ENCODE measurements at regions of chr2 and their contacts with region 1.

Region 1: GRCh38 chr2:68467077-68467960 is at the starts of genes APLF and FBXO48:
- DNase-seq: peak; percentile 98
- ATAC-seq: peak; percentile 91
- H3K4me3 ChIP-seq: peak within 1 kb of the TSS; percentile 72 to 98 (median 90)
- H3K4me3 Mint-ChIP-seq: peak within 1 kb of the TSS; percentile 97
- H3K27ac ChIP-seq: peak within 1 kb of the TSS; percentile 85 to 97
- H3K27ac Mint-ChIP-seq: peak within 1 kb of the TSS; percentile 96
- H3K4me1 ChIP-seq: peaks cover 11 to 15% of the 10 kb centered on the region in 2 donors
- H3K4me1 Mint-ChIP-seq: peaks cover 28% of the 10 kb centered on the region
- H3K27me3 ChIP-seq: no peaks in the 10 kb centered on the region
- H3K27me3 Mint-ChIP-seq: no peaks in the 10 kb centered on the region
- CTCF ChIP-seq: no peak
- total RNA-seq, gene APLF: 6.3 and 7.4 TPM in 2 replicates
- total RNA-seq, gene FBXO48: 3.2 TPM in 2 replicates

Region 2: DNA sequence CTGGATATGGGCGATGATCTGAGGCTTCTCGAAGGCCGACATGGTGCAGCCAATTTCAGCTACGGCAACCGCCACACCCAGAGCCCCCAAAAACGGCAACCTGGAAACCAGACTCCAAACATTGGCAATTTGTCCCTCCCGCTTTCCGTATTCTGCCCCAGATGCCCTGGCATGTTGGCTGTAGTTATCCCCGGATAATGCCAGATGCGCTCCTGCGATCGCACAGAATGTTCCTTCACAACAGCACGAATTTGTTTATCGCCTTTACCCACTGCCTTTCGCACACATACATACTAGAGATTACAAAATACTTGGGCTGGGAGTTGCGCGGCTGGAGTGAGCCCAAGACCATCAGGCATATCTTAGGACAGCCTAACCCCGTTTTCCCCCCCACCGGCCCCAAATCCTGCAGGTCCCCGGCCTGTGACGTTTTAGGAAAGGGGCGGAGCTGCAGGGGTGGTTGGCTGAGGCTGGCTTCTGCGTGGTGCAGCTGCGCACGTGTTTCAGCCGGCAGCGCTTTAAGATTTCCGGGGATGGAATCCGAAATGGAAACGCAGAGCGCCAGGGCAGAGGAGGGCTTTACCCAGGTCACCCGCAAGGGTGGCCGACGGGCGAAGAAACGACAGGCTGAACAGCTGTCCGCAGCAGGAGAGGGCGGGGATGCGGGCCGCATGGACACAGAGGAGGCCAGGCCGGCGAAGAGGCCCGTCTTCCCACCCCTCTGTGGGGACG is 309.8 kb before region 1 on chr2 and contains the start of gene PNO1:
- CTCF ChIA-PET with region 1: no interaction called
- POLR2A ChIA-PET with region 1: no interaction called
- intact Hi-C with region 1: loop called (anchors 1 kb)
- DNase-seq: peak; percentile 98
- ATAC-seq: peak; percentile 95
- H3K4me3 ChIP-seq: peak within 1 kb of the TSS; percentile 80 to 93 (median 89)
- H3K4me3 Mint-ChIP-seq: peak within 1 kb of the TSS; percentile 97
- H3K27ac ChIP-seq: peak within 1 kb of the TSS; percentile 96 to 98
- H3K27ac Mint-ChIP-seq: peak within 1 kb of the TSS; percentile 100
- H3K4me1 ChIP-seq: peaks cover 32 to 35% of the 10 kb centered on the region in 2 donors
- H3K4me1 Mint-ChIP-seq: peaks cover 48% of the 10 kb centered on the region
- H3K27me3 ChIP-seq: no peaks in the 10 kb centered on the region
- H3K27me3 Mint-ChIP-seq: no peaks in the 10 kb centered on the region
- CTCF ChIP-seq: no peak
- total RNA-seq, gene PNO1: 10.8 and 12.3 TPM in 2 replicates

Region 3: DNA sequence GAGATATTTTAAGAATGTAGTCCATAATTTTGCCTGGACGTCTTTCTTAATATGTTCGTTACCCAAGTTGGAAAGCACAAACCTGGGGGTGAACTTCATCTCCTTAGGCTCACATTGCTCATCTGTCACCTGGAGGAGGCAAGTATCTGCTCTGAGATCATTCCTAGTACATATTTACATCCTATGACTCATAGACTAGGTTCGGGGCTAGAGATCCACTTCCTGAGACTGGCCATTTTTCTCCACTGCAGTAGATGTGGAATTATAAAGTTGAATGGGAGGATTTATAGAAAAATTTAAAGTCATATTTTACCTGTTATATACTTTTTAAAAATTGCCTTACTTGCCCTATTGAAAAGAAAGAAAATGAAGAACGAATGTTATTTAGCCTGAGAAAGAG is 98.5 kb after region 1 on chr2:
- CTCF ChIA-PET with region 1: no interaction called
- POLR2A ChIA-PET with region 1: no interaction called
- intact Hi-C with region 1: no loop called
- DNase-seq: no peak
- ATAC-seq: no peak
- H3K4me3 ChIP-seq: no peak overlapping the region
- H3K4me3 Mint-ChIP-seq: no peak overlapping the region
- H3K27ac ChIP-seq: no peak overlapping the region
- H3K27ac Mint-ChIP-seq: no peak overlapping the region
- H3K4me1 ChIP-seq: no peaks in the 10 kb centered on the region
- H3K4me1 Mint-ChIP-seq: no peaks in the 10 kb centered on the region
- H3K27me3 ChIP-seq: no peaks in the 10 kb centered on the region
- H3K27me3 Mint-ChIP-seq: no peaks in the 10 kb centered on the region
- CTCF ChIP-seq: no peak

Region 4: GRCh38 chr2:68594674-68595492 is 127.6 kb after region 1 on chr2:
- CTCF ChIA-PET with region 1: interaction called, 54 read pairs
- POLR2A ChIA-PET with region 1: no interaction called
- intact Hi-C with region 1: loop called (anchors 1 kb)
- DNase-seq: peak; percentile 64
- ATAC-seq: no peak
- H3K4me3 ChIP-seq: no peak overlapping the region
- H3K4me3 Mint-ChIP-seq: peak overlapping the region; percentile 9
- H3K27ac ChIP-seq: no peak overlapping the region
- H3K27ac Mint-ChIP-seq: no peak overlapping the region
- H3K4me1 ChIP-seq: peaks cover 5 to 9% of the 10 kb centered on the region in 2 donors
- H3K4me1 Mint-ChIP-seq: peaks cover 14% of the 10 kb centered on the region
- H3K27me3 ChIP-seq: no peaks in the 10 kb centered on the region
- H3K27me3 Mint-ChIP-seq: no peaks in the 10 kb centered on the region
- CTCF ChIP-seq: peak; percentile 96

Region 5: GRCh38 chr2:68605939-68606338 is 138.6 kb after region 1 on chr2:
- CTCF ChIA-PET with region 1: no interaction called
- POLR2A ChIA-PET with region 1: no interaction called
- intact Hi-C with region 1: no loop called
- DNase-seq: no peak
- ATAC-seq: no peak
- H3K4me3 ChIP-seq: no peak overlapping the region
- H3K4me3 Mint-ChIP-seq: no peak overlapping the region
- H3K27ac ChIP-seq: no peak overlapping the region
- H3K27ac Mint-ChIP-seq: no peak overlapping the region
- H3K4me1 ChIP-seq: no peaks in the 10 kb centered on the region
- H3K4me1 Mint-ChIP-seq: no peaks in the 10 kb centered on the region
- H3K27me3 ChIP-seq: no peaks in the 10 kb centered on the region
- H3K27me3 Mint-ChIP-seq: no peaks in the 10 kb centered on the region
- CTCF ChIP-seq: no peak

Region 6: DNA sequence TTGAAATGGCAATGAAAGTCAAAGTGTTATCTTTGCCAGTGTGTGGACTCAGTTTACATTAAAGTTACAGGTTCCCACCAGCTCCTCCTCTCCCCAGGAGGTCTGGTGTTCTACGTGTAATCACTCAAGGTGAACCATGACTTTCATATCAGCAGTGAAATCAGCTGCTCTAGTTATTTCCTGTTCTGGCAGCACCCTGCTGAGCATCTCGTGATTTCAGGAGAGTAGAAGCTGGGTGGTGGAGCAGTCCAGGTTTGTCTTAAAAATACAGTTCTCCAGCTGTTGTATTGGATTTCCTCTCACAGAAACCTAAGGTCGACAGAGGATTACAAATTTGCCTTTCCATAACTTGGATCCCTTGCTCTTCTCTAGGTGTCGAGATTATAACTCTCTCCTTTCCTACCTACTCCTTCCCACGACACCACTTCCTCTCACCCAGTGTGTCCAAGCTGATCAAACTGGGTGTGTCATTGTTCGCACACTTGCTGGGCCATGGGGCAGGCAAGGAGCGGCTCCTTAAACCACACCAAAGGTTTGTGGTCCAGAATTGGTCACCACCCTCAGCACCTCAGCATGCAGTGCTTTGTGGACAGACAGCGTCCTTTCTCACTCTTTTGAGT is 254.3 kb after region 1 on chr2:
- CTCF ChIA-PET with region 1: interaction called, 12 read pairs
- POLR2A ChIA-PET with region 1: interaction called, 6 read pairs
- intact Hi-C with region 1: loop called (anchors 5 kb)
- DNase-seq: peak; percentile 85
- ATAC-seq: peak; percentile 88
- H3K4me3 ChIP-seq: peak overlapping the region in 3 of 5 experiments; percentile 1 to 14 (median 3)
- H3K4me3 Mint-ChIP-seq: peak overlapping the region; percentile 82
- H3K27ac ChIP-seq: peak overlapping the region; percentile 66 to 81
- H3K27ac Mint-ChIP-seq: peak overlapping the region; percentile 89
- H3K4me1 ChIP-seq: peaks cover 41 to 56% of the 10 kb centered on the region in 2 donors
- H3K4me1 Mint-ChIP-seq: peaks cover 65% of the 10 kb centered on the region
- H3K27me3 ChIP-seq: no peaks in the 10 kb centered on the region
- H3K27me3 Mint-ChIP-seq: no peaks in the 10 kb centered on the region
- CTCF ChIP-seq: no peak

Region 7: GRCh38 chr2:68789603-68790002 is 322.3 kb after region 1 on chr2:
- CTCF ChIA-PET with region 1: interaction called, 3 read pairs
- POLR2A ChIA-PET with region 1: no interaction called
- intact Hi-C with region 1: loop called (anchors 1 kb)
- DNase-seq: peak; percentile 96
- ATAC-seq: peak; percentile 89
- H3K4me3 ChIP-seq: peak overlapping the region in 1 of 5 experiments; percentile 27
- H3K4me3 Mint-ChIP-seq: peak overlapping the region; percentile 80
- H3K27ac ChIP-seq: peak overlapping the region; percentile 91 to 96
- H3K27ac Mint-ChIP-seq: peak overlapping the region; percentile 99
- H3K4me1 ChIP-seq: peaks cover 94 to 96% of the 10 kb centered on the region in 2 donors
- H3K4me1 Mint-ChIP-seq: peaks cover 55% of the 10 kb centered on the region
- H3K27me3 ChIP-seq: no peaks in the 10 kb centered on the region
- H3K27me3 Mint-ChIP-seq: no peaks in the 10 kb centered on the region
- CTCF ChIP-seq: no peak

Region 8: GRCh38 chr2:68943581-68944568 is 476.6 kb after region 1 on chr2:
- CTCF ChIA-PET with region 1: interaction called, 21 read pairs
- POLR2A ChIA-PET with region 1: no interaction called
- intact Hi-C with region 1: no loop called
- DNase-seq: peak; percentile 70
- ATAC-seq: peak; percentile 73
- H3K4me3 ChIP-seq: no peak overlapping the region
- H3K4me3 Mint-ChIP-seq: no peak overlapping the region
- H3K27ac ChIP-seq: no peak overlapping the region
- H3K27ac Mint-ChIP-seq: no peak overlapping the region
- H3K4me1 ChIP-seq: peaks cover 0 to 5% of the 10 kb centered on the region in 2 donors
- H3K4me1 Mint-ChIP-seq: peaks cover 4% of the 10 kb centered on the region
- H3K27me3 ChIP-seq: peaks cover 0 to 24% (median 12%) of the 10 kb centered on the region in 4 experiments
- H3K27me3 Mint-ChIP-seq: peaks cover 54% of the 10 kb centered on the region
- CTCF ChIP-seq: peak; percentile 91

Region 9: GRCh38 chr2:69643602-69644505 is 1176.5 kb after region 1 on chr2 and contains the start of gene AAK1:
- CTCF ChIA-PET with region 1: no interaction called
- POLR2A ChIA-PET with region 1: no interaction called
- intact Hi-C with region 1: loop called (anchors 10 kb)
- DNase-seq: peak; percentile 89
- ATAC-seq: peak; percentile 69
- H3K4me3 ChIP-seq: peak within 1 kb of the TSS; percentile 63 to 99 (median 91)
- H3K4me3 Mint-ChIP-seq: peak within 1 kb of the TSS; percentile 95
- H3K27ac ChIP-seq: peak within 1 kb of the TSS in 1 of 2 donors; percentile 16
- H3K27ac Mint-ChIP-seq: peak within 1 kb of the TSS; percentile 94
- H3K4me1 ChIP-seq: peaks cover 42 to 51% of the 10 kb centered on the region in 2 donors
- H3K4me1 Mint-ChIP-seq: peaks cover 44% of the 10 kb centered on the region
- H3K27me3 ChIP-seq: peaks cover 4 to 74% (median 55%) of the 10 kb centered on the region in 4 experiments
- H3K27me3 Mint-ChIP-seq: peaks cover 73% of the 10 kb centered on the region
- CTCF ChIP-seq: no peak
- total RNA-seq, gene AAK1: 7.2 and 8.4 TPM in 2 replicates